ENCODE measurements at regions of chr4 and their contacts with region 1.

Region 1: GRCh38 chr4:183840311-183840710 is 64.8 kb upstream of the STOX2 start:
- DNase-seq: peak; percentile 82
- ATAC-seq: peak; percentile 77
- H3K4me3 ChIP-seq: no peak overlapping the region
- H3K27ac ChIP-seq: no peak overlapping the region
- H3K4me1 ChIP-seq: no peaks in the 10 kb centered on the region
- H3K27me3 ChIP-seq: peaks cover 9% of the 10 kb centered on the region
- CTCF ChIP-seq: peak; percentile 82

Region 2: DNA sequence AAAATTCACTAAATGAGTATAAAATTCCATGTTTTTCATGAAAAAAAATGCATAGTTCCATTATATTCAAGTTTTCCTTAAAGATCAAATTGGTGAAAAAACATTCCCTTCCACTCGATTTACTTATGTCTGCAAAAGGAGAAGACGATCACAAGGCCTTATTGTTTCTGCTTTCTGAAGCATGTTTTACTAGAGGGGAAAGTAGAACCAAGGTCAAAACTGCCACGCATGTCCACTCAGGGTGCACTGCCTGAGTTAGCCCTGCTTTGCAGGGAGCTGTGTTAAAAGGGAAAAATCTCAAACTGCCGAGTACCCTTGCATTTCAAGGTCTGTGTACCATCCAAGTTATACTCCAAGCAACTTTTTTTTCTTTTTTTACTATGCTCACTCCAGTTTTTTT is 124.0 kb before region 1 on chr4:
- CTCF ChIA-PET with region 1: no interaction called
- POLR2A ChIA-PET with region 1: no interaction called
- intact Hi-C with region 1: loop called (anchors 10 kb)
- DNase-seq: peak; percentile 4
- ATAC-seq: no peak
- H3K4me3 ChIP-seq: no peak overlapping the region
- H3K27ac ChIP-seq: peak overlapping the region; percentile 25; the same call in 1 of the 2 replicates
- H3K4me1 ChIP-seq: no peaks in the 10 kb centered on the region
- H3K27me3 ChIP-seq: no peaks in the 10 kb centered on the region
- CTCF ChIP-seq: no peak

Region 3: DNA sequence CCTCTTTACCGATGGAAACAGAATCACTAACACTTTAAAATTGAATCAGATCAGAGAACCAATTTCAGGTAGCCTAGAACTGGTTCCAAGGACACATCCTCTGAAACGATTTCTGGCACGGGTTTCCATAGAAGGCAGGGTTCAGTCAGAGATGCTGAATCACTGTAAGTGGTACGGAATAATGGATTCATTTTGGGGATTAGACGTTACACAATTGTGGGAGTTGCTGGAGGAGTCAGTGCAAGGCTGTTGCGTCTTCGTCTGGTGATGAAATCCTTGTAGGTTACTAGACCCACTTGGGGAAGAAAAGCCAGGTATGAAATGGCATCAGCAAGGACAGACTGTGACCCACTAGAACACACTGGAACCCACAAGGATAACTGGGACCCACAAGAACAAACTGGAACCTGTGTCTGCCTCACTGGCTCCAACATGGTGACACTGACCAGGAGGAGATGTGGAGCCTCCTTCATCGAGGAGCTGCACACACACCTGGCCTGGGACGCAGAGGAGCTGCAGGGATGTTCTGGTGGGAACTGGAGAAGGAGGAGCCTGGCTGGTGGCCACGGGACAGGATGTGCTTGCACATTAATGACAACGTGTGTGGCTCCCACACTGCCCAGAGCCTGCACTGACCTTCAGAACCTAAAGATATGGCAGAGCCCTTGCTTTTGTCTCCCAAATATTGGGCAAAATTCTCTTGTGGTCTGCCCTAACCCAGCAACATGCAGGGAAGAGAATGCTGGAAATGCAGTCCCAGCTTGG is 76.1 kb before region 1 on chr4:
- CTCF ChIA-PET with region 1: no interaction called
- POLR2A ChIA-PET with region 1: no interaction called
- intact Hi-C with region 1: loop called (anchors 5 kb)
- DNase-seq: no peak
- ATAC-seq: no peak
- H3K4me3 ChIP-seq: no peak overlapping the region
- H3K27ac ChIP-seq: no peak overlapping the region
- H3K4me1 ChIP-seq: peaks cover 12% of the 10 kb centered on the region; the same call in 1 of the 2 replicates
- H3K27me3 ChIP-seq: no peaks in the 10 kb centered on the region
- CTCF ChIP-seq: no peak

Region 4: DNA sequence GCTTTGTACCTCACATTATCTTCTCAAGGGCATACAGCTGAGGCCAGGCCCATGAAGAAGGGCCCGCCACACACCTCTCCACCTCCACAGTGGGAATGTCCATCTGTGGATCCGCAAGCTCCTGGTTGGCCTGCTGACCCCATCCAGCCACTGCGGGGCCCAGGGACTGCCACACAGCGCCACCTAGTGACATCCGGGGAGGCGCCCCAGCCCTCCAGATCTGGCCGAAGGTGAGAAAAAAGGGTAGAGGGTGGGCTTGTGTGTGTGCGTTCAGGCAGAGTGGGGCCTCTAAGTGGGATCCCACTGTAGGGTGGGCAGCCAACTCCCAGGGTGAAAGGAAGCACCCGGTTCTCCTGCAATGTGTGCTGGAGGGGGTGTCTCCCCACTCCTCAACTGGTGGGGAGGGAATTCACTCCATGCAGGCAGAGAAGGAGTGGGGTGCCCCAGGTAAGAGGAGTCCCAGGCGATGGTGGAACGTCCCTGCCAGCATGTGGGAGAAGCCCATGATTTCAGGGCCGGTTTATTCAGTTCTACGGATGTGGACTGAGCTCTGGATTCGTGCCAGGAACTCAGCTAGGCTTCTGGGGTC is 260.1 kb after region 1 on chr4:
- CTCF ChIA-PET with region 1: no interaction called
- POLR2A ChIA-PET with region 1: no interaction called
- intact Hi-C with region 1: loop called (anchors 1 kb)
- DNase-seq: peak; percentile 35
- ATAC-seq: peak; percentile 72
- H3K4me3 ChIP-seq: no peak overlapping the region
- H3K27ac ChIP-seq: no peak overlapping the region
- H3K4me1 ChIP-seq: no peaks in the 10 kb centered on the region
- H3K27me3 ChIP-seq: peaks cover 5% of the 10 kb centered on the region; the same call in 1 of the 2 replicates
- CTCF ChIP-seq: peak; percentile 85

Region 5: GRCh38 chr4:184168406-184169019 is 328.2 kb after region 1 on chr4:
- CTCF ChIA-PET with region 1: no interaction called
- POLR2A ChIA-PET with region 1: no interaction called
- intact Hi-C with region 1: loop called (anchors 1 kb)
- DNase-seq: peak; percentile 67
- ATAC-seq: peak; percentile 98
- H3K4me3 ChIP-seq: peak overlapping the region; percentile 61
- H3K27ac ChIP-seq: no peak overlapping the region
- H3K4me1 ChIP-seq: no peaks in the 10 kb centered on the region; the same call in 1 of the 2 replicates
- H3K27me3 ChIP-seq: peaks cover 10% of the 10 kb centered on the region; the same call in 1 of the 2 replicates
- CTCF ChIP-seq: peak; percentile 81

Region 6: DNA sequence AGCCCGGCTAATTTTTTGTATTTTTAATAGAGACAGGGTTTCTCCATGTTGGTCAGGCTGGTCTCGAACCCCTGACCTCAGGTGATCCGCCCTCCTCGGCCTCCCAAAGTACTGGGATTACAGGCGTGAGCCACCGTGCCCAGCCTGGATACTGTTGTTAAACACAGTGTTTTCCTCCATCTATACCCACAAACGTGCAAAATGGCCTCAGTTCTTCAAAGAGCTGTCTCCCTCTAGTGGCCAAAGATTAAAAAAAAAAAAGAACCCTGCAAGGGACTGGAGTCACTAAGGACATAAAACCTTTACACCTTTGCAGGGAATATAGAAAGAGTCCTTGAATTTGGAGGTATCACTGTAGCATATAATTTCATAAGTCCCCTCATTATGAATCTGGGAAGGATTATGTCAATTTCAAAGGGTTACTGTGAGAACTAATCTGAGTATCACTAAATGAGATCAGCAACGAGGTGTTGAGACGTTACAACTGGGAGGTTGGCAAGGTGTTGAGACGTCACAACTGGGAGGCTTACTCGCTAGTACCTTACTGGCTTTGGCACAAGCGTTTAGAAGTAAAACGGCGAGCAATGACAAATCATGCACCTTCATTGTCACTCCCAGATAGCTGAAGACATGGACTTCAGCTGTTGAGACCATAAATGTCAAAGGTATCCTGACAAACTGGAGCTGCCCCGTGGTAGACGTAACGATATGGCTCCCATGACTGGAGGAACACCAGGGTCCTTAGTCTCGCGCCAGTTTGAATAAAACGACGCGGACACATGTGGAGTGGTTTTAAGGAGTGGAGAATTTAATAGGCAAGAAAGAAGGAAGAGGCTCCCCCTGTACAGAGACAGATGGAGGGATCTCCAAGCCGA is 410.7 kb after region 1 on chr4:
- CTCF ChIA-PET with region 1: no interaction called
- POLR2A ChIA-PET with region 1: no interaction called
- intact Hi-C with region 1: loop called (anchors 1 kb)
- DNase-seq: peak; percentile 64
- ATAC-seq: no peak; the same call in 1 of the 2 replicates
- H3K4me3 ChIP-seq: no peak overlapping the region
- H3K27ac ChIP-seq: no peak overlapping the region
- H3K4me1 ChIP-seq: no peaks in the 10 kb centered on the region
- H3K27me3 ChIP-seq: no peaks in the 10 kb centered on the region
- CTCF ChIP-seq: peak; percentile 64

Measured in PC-3 (cell line).